ENCODE measurements at regions of chr14 and their contacts with region 1.

Region 1: DNA sequence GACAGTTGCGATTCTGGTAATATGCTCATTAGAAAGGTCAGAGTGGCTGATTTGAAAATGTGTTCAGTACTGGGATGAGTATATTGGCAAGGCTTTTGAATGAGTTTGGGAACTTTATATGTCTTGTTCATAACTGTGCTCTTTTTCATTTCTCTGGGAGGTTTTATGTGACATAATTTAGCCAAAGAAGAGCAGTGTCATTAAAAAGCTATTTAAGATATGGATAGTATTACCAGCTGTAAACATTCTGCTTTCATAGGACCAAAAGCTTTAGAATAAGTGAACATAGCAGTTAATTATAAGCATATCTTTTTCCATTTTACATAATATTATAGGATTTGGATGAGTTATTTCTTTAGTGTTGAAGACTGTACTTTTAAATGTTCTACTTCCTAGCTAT is 260.4 kb downstream of the TTC6 start:
- DNase-seq: no peak
- ATAC-seq: no peak
- H3K4me3 ChIP-seq: no peak overlapping the region
- H3K27ac ChIP-seq: no peak overlapping the region
- H3K4me1 ChIP-seq: no peaks in the 10 kb centered on the region
- H3K27me3 ChIP-seq: no peaks in the 10 kb centered on the region
- CTCF ChIP-seq: no peak

Region 2: GRCh38 chr14:37241198-37241597 is 614.7 kb before region 1 on chr14:
- CTCF ChIA-PET with region 1: interaction called, 11 read pairs
- POLR2A ChIA-PET with region 1: no interaction called
- in situ Hi-C with region 1: no loop called
- intact Hi-C with region 1: no loop called
- DNase-seq: no peak
- ATAC-seq: no peak
- H3K4me3 ChIP-seq: no peak overlapping the region
- H3K27ac ChIP-seq: no peak overlapping the region
- H3K4me1 ChIP-seq: no peaks in the 10 kb centered on the region
- H3K27me3 ChIP-seq: no peaks in the 10 kb centered on the region
- CTCF ChIP-seq: no peak

Region 3: GRCh38 chr14:37720131-37720530 is 135.7 kb before region 1 on chr14:
- CTCF ChIA-PET with region 1: no interaction called
- POLR2A ChIA-PET with region 1: interaction called, 10 read pairs
- in situ Hi-C with region 1: no loop called
- intact Hi-C with region 1: no loop called
- DNase-seq: no peak
- ATAC-seq: no peak
- H3K4me3 ChIP-seq: no peak overlapping the region
- H3K27ac ChIP-seq: no peak overlapping the region
- H3K4me1 ChIP-seq: no peaks in the 10 kb centered on the region
- H3K27me3 ChIP-seq: no peaks in the 10 kb centered on the region
- CTCF ChIP-seq: no peak

Region 4: GRCh38 chr14:37746140-37746832 is 109.6 kb before region 1 on chr14:
- CTCF ChIA-PET with region 1: no interaction called
- POLR2A ChIA-PET with region 1: no interaction called
- in situ Hi-C with region 1: no loop called
- intact Hi-C with region 1: no loop called
- DNase-seq: no peak
- ATAC-seq: no peak
- H3K4me3 ChIP-seq: no peak overlapping the region
- H3K27ac ChIP-seq: no peak overlapping the region
- H3K4me1 ChIP-seq: no peaks in the 10 kb centered on the region
- H3K27me3 ChIP-seq: no peaks in the 10 kb centered on the region
- CTCF ChIP-seq: no peak